Calu3 (cell line): ENCODE measurements at regions of chr11 and their contacts with region 1.

Region 1: GRCh38 chr11:128630367-128631230 is 43.2 kb upstream of the ETS1 start:
- DNase-seq: peak; percentile 81
- H3K4me3 Mint-ChIP-seq: no peak overlapping the region
- H3K27ac Mint-ChIP-seq: no peak overlapping the region
- H3K4me1 Mint-ChIP-seq: no peaks in the 10 kb centered on the region
- H3K27me3 Mint-ChIP-seq: no peaks in the 10 kb centered on the region
- CTCF ChIP-seq: peak; percentile 44

Region 2: GRCh38 chr11:128026596-128026995 is 604.0 kb before region 1 on chr11:
- CTCF ChIA-PET with region 1: no interaction called
- intact Hi-C with region 1: loop called (anchors 2 kb)
- DNase-seq: peak; percentile 42
- H3K4me3 Mint-ChIP-seq: no peak overlapping the region
- H3K27ac Mint-ChIP-seq: peak overlapping the region; percentile 71
- H3K4me1 Mint-ChIP-seq: peaks cover 20% of the 10 kb centered on the region
- H3K27me3 Mint-ChIP-seq: no peaks in the 10 kb centered on the region
- CTCF ChIP-seq: no peak

Region 3: DNA sequence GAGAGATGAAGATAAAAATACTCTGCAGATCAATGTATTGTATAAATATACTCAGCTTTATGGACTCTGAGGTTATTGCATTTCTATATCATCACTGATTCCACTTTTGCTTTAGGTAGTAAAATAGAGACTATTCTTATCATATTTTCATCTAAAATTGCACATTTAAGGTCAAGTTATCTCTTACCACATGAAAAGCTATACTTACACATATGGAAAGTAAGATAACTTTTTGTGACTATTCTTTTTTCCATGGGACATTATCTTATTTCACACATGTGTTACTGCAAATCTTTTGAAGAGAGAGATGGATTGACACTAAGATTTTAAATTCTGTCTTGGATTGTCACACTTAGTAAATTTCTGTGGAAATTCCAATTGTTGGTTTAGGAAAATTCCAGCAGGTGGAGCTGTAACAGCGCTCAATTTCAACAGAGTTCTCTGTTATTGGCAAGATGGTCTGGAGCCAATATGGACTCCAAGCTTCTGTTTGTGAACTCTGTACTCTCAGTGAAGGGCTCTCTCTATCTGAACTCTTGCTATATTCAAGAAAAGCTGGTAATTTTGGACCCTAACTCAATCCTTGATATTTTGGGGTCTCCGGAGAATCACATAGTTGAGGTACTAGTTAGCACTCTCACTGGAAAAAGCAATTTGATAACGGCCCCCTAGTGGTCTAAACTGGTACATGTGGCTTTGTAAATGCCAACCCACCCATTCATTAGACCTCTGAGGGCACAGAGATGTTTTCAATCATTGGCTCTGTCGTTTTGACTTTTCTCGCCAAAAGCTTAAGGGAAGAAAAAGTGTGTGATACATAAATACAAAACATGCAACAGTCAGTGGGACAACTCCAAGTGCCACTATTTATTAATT is 472.9 kb before region 1 on chr11:
- CTCF ChIA-PET with region 1: interaction called, 12 read pairs
- intact Hi-C with region 1: loop called (anchors 1 kb)
- DNase-seq: peak; percentile 57
- H3K4me3 Mint-ChIP-seq: no peak overlapping the region
- H3K27ac Mint-ChIP-seq: no peak overlapping the region
- H3K4me1 Mint-ChIP-seq: no peaks in the 10 kb centered on the region
- H3K27me3 Mint-ChIP-seq: no peaks in the 10 kb centered on the region
- CTCF ChIP-seq: peak; percentile 79

Region 4: GRCh38 chr11:128448200-128448886 is 182.3 kb before region 1 on chr11:
- CTCF ChIA-PET with region 1: no interaction called
- intact Hi-C with region 1: loop called (anchors 5 kb)
- DNase-seq: peak; percentile 84
- H3K4me3 Mint-ChIP-seq: no peak overlapping the region
- H3K27ac Mint-ChIP-seq: peak overlapping the region; percentile 96
- H3K4me1 Mint-ChIP-seq: peaks cover 47% of the 10 kb centered on the region
- H3K27me3 Mint-ChIP-seq: no peaks in the 10 kb centered on the region
- CTCF ChIP-seq: no peak

Region 5: GRCh38 chr11:128483211-128483788 is 147.3 kb before region 1 on chr11:
- CTCF ChIA-PET with region 1: interaction called, 11 read pairs
- intact Hi-C with region 1: no loop called
- DNase-seq: no peak
- H3K4me3 Mint-ChIP-seq: no peak overlapping the region
- H3K27ac Mint-ChIP-seq: no peak overlapping the region
- H3K4me1 Mint-ChIP-seq: peaks cover 7% of the 10 kb centered on the region
- H3K27me3 Mint-ChIP-seq: no peaks in the 10 kb centered on the region
- CTCF ChIP-seq: no peak

Region 6: GRCh38 chr11:128831174-128832120 is 200.8 kb after region 1 on chr11:
- CTCF ChIA-PET with region 1: interaction called, 3 read pairs
- intact Hi-C with region 1: loop called (anchors 2 kb)
- DNase-seq: peak; percentile 76
- H3K4me3 Mint-ChIP-seq: peak overlapping the region; percentile 44
- H3K27ac Mint-ChIP-seq: peak overlapping the region; percentile 50
- H3K4me1 Mint-ChIP-seq: peaks cover 8% of the 10 kb centered on the region
- H3K27me3 Mint-ChIP-seq: no peaks in the 10 kb centered on the region
- CTCF ChIP-seq: peak; percentile 64